ENCODE measurements at regions of chr11 and their contacts with region 1.

Region 1: DNA sequence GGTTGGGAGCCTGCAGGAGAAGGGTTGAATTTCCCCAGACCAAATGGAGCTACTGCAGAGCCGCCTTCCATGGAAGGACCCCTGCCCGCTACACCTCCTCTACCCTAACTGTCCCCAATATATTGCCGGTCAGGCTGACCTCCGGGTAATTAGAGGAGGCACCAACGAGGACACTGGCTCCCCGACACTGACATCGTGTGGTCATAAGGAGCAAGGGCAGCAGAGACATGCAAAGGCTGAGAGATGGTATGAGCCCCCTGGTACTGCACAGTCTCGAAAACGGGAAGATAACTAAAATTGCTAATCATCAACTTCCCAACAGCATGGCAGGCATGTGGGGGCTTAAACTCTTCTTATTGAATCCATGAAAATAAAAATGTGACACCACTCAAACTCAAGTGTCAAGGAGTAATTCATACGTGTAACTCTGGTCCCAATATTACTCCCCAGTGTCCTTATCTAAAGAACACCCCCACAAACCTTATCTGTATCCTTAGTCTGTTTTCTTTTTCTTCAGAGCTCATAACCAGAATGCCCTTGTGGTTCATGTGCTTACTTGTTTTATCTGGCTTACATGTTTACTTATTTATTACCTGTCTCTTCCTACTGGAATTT is 4.4 kb downstream of the CAVIN3 start:
- DNase-seq: peak; percentile 48
- ATAC-seq: peak; percentile 52
- H3K4me3 Mint-ChIP-seq: no peak overlapping the region
- H3K27ac Mint-ChIP-seq: no peak overlapping the region
- H3K4me1 Mint-ChIP-seq: peaks cover 13% of the 10 kb centered on the region
- H3K27me3 Mint-ChIP-seq: peaks cover 37% of the 10 kb centered on the region

Region 2: GRCh38 chr11:6251120-6251733 is 64.7 kb before region 1 on chr11:
- CTCF ChIA-PET with region 1: interaction called, 16 read pairs
- POLR2A ChIA-PET with region 1: no interaction called
- DNase-seq: peak; percentile 68
- ATAC-seq: peak; percentile 77
- H3K4me3 Mint-ChIP-seq: no peak overlapping the region
- H3K27ac Mint-ChIP-seq: no peak overlapping the region
- H3K4me1 Mint-ChIP-seq: no peaks in the 10 kb centered on the region
- H3K27me3 Mint-ChIP-seq: peaks cover 4% of the 10 kb centered on the region

Region 3: DNA sequence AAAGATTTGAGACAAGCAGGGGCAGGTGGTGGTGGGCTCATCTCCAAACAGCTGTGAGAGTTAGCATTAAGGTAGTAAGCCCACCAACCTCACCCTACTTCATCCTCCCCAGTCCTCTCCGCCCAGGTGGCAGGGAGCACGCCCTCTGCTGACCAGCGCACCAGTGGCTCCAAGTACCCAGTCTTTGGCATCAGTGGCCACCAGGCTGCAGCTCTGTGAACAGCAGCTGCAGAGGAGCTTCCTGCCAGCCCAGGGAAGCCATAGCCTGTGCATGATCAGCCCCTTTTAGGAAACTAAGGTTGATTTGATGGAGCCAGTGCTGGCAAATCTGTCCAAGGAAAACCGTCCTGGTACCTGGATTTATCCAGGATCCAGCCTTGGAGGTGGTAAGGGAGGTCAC is 17.3 kb before region 1 on chr11:
- CTCF ChIA-PET with region 1: interaction called, 15 read pairs
- POLR2A ChIA-PET with region 1: no interaction called
- DNase-seq: peak; percentile 30
- ATAC-seq: no peak
- H3K4me3 Mint-ChIP-seq: no peak overlapping the region
- H3K27ac Mint-ChIP-seq: no peak overlapping the region
- H3K4me1 Mint-ChIP-seq: no peaks in the 10 kb centered on the region
- H3K27me3 Mint-ChIP-seq: peaks cover 16% of the 10 kb centered on the region